Stomach (tissue), 19 donors: ENCODE measurements at regions of chr18 and their contacts with region 1.

Region 1: GRCh38 chr18:55415258-55415871 is 172.6 kb downstream of the TCF4 start:
- DNase-seq: peak; percentile 86 to 94
- H3K4me3 ChIP-seq: no peak overlapping the region
- H3K27ac ChIP-seq: no peak overlapping the region
- H3K4me1 ChIP-seq: peaks cover 0 to 12% (median 4%) of the 10 kb centered on the region in 4 donors
- H3K27me3 ChIP-seq: no peaks in the 10 kb centered on the region
- CTCF ChIP-seq: peak in 5 of 7 experiments; percentile 61 to 87 (median 77)
- EP300 ChIP-seq: no peak
- POLR2A ChIP-seq: no peak

Region 2: DNA sequence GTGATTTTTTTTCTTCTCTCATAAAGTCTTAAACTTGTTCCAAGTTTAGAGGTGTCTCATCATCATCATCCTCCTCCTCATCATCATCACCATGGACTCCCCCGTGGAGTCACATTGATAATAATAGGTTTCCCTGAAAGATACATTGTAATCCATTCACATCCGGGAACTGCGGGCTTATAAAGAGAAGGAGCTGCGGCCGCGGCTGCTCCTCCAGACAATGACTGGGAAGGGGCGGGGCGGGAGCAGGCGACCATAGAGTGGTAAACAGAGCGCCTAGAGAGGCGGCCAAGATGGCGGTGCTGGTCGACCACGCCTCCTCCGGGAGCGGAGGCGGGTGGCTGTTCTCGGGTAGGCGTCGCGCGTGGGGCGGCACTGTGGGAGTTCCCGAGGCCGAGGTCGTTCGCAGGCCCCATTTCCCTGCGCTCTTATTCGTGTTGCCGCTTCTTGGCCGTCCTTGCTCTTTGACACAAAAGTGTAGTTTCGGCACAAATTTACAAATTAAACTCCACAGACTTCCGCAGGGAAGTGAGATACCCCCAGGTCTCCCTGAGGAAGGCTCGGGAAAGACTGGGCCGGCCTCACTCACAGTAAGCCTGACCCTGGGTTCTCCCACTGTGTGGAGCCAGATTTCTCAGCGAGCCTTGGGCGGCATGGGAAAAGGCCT is 174.4 kb after region 1 on chr18:
- intact Hi-C with region 1: loop called (anchors 5 kb)
- DNase-seq: peak; percentile 81 to 98
- H3K4me3 ChIP-seq: peak overlapping the region; percentile 57 to 71 (median 62)
- H3K27ac ChIP-seq: peak overlapping the region; percentile 15 to 91 (median 87)
- H3K4me1 ChIP-seq: peaks cover 0 to 24% (median 4%) of the 10 kb centered on the region in 4 donors
- H3K27me3 ChIP-seq: peaks cover 0 to 12% (median 0%) of the 10 kb centered on the region in 3 donors
- CTCF ChIP-seq: no peak
- EP300 ChIP-seq: no peak
- POLR2A ChIP-seq: no peak

Region 3: GRCh38 chr18:56575819-56576663 is 1160.7 kb after region 1 on chr18:
- intact Hi-C with region 1: loop called (anchors 10 kb)
- DNase-seq: peak in 1 of 2 donors; percentile 81
- H3K4me3 ChIP-seq: no peak overlapping the region
- H3K27ac ChIP-seq: peak overlapping the region in 1 of 5 donors; percentile 1
- H3K4me1 ChIP-seq: peaks cover 0 to 33% (median 17%) of the 10 kb centered on the region in 4 donors
- H3K27me3 ChIP-seq: peaks cover 0 to 3% (median 0%) of the 10 kb centered on the region in 3 donors
- CTCF ChIP-seq: peak in 5 of 7 experiments; percentile 48 to 70 (median 66)
- EP300 ChIP-seq: no peak
- POLR2A ChIP-seq: no peak